Heart right ventricle (tissue), 16 donors: ENCODE measurements at regions of chr19 and their contacts with region 1.

Region 1: DNA sequence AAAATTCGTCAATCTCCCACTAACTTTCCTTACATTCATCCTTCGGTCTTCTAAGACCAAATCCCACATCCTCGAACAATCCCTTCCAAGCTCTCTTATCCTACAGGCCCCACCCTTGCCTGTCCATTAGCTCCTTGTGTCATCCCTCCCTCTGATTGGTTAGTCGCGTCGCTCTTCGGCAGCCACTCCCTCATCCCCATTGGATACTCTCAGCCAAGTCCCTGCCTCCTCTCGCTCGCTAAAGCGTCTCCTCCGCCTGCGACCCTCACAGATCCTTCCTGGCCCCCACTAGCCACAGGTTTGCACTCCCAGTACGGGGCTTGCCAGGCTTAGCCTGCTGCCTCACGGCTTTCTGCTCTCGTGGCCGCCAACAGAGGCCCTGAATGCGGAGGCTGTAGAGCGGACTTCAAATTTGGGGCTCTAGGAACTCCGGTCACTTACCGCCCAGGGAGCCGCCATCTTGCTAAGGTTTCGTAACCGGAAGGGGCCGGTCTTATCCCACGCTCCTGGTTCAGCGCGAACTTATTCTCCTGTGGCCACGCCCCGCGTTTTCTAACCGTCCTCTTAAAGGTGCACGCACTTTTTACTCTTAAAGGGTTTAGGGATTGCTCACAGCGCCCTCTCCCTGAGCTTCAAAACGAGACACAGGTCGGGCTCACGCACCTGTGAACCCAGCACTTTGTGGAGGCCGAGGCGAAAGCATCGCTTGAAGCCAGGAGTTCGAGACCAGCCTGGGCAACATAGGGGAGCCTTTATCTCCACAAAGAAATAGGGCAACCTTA is at the start of gene DMAC2:
- DNase-seq: peak; percentile 93 to 97
- ATAC-seq: peak; percentile 95 to 99 (median 98)
- H3K4me3 ChIP-seq: peak within 1 kb of the TSS; percentile 54 to 83 (median 74)
- H3K27ac ChIP-seq: peak within 1 kb of the TSS; percentile 83 to 97 (median 96)
- H3K4me1 ChIP-seq: peaks cover 0 to 31% (median 15%) of the 10 kb centered on the region in 9 donors
- H3K27me3 ChIP-seq: peaks cover 0 to 6% (median 0%) of the 10 kb centered on the region in 7 donors
- CTCF ChIP-seq: peak in 8 of 9 donors; percentile 46 to 74 (median 58)
- total RNA-seq, gene DMAC2: 80.8 to 139 (median 101) TPM

Region 2: GRCh38 chr19:41310033-41310758 is 129.4 kb before region 1 on chr19 and contains the start of gene CCDC97:
- intact Hi-C with region 1: loop called in 2 of 10 experiments (anchors 5 kb)
- DNase-seq: peak; percentile 88 to 89
- ATAC-seq: peak; percentile 82 to 93 (median 87)
- H3K4me3 ChIP-seq: peak within 1 kb of the TSS; percentile 15 to 84 (median 70)
- H3K27ac ChIP-seq: peak within 1 kb of the TSS; percentile 89 to 99 (median 94)
- H3K4me1 ChIP-seq: peaks cover 6 to 64% (median 39%) of the 10 kb centered on the region in 9 donors
- H3K27me3 ChIP-seq: no peaks in the 10 kb centered on the region
- CTCF ChIP-seq: peak in 2 of 9 donors; percentile 8 to 14
- total RNA-seq, gene CCDC97: 12.6 to 19.2 (median 16.4) TPM

Region 3: DNA sequence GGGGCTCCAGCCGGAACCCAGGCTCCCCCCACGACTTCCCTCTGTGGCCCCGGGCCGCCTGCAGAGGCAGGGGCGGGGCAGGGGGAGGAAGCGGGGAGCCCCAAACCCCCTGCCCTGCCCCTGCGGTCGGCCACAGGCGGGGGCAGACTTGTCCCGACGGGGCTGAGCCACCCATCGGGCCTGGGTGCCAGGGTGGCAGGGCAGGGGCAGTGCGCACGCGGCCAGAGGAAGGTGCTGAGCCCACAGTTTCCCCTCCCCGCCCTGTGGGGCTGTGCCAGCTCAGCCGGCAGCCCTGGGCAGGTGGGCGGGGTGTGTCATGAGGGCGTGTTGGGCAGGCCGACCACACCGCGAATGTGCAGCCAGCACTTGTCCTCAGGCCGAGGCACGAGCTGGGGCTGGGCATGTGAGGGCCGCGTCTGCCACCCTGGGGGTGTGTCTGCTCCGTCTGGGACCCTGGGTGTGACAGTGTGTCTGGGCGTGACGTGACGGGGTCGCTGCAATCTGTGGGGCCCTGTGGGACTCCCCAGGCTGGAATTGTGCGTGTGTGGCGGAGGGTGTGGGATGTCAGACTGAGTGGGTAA is 112.0 kb before region 1 on chr19:
- intact Hi-C with region 1: loop called in 1 of 10 experiments (anchors 10 kb)
- DNase-seq: peak; percentile 76 to 79
- ATAC-seq: peak; percentile 37 to 65 (median 55)
- H3K4me3 ChIP-seq: peak overlapping the region in 9 of 10 donors; percentile 20 to 49 (median 40)
- H3K27ac ChIP-seq: peak overlapping the region; percentile 67 to 96 (median 88)
- H3K4me1 ChIP-seq: peaks cover 36 to 87% (median 62%) of the 10 kb centered on the region in 9 donors
- H3K27me3 ChIP-seq: no peaks in the 10 kb centered on the region
- CTCF ChIP-seq: peak in 1 of 9 donors; percentile 13

Region 4: GRCh38 chr19:41397086-41398049 is 42.3 kb before region 1 on chr19 and contains the starts of genes BCKDHA and EXOSC5:
- intact Hi-C with region 1: loop called in 6 of 10 experiments (anchors 2 to 5 kb)
- DNase-seq: peak; percentile 99 to 100
- ATAC-seq: peak; percentile 98 to 99 (median 99)
- H3K4me3 ChIP-seq: peak within 1 kb of the TSS; percentile 58 to 96 (median 88)
- H3K27ac ChIP-seq: peak within 1 kb of the TSS; percentile 76 to 95 (median 92)
- H3K4me1 ChIP-seq: peaks cover 14 to 51% (median 36%) of the 10 kb centered on the region in 9 donors
- H3K27me3 ChIP-seq: no peaks in the 10 kb centered on the region
- CTCF ChIP-seq: no peak
- total RNA-seq, gene BCKDHA: 35.5 to 63.0 (median 42.5) TPM
- total RNA-seq, gene EXOSC5: 10.6 to 17.8 (median 13.6) TPM

Region 5: GRCh38 chr19:41563854-41564514 is 124.4 kb after region 1 on chr19:
- intact Hi-C with region 1: no loop called
- DNase-seq: no peak
- ATAC-seq: peak in 1 of 8 donors; percentile 38
- H3K4me3 ChIP-seq: peak overlapping the region in 7 of 10 donors; percentile 4 to 28 (median 11)
- H3K27ac ChIP-seq: no peak overlapping the region
- H3K4me1 ChIP-seq: peaks cover 3 to 32% (median 14%) of the 10 kb centered on the region in 9 donors
- H3K27me3 ChIP-seq: peaks cover 11 to 78% (median 57%) of the 10 kb centered on the region in 7 donors
- CTCF ChIP-seq: no peak